HEK293 (cell line): ENCODE measurements at regions of chr6 and their contacts with region 1.

Region 1: DNA sequence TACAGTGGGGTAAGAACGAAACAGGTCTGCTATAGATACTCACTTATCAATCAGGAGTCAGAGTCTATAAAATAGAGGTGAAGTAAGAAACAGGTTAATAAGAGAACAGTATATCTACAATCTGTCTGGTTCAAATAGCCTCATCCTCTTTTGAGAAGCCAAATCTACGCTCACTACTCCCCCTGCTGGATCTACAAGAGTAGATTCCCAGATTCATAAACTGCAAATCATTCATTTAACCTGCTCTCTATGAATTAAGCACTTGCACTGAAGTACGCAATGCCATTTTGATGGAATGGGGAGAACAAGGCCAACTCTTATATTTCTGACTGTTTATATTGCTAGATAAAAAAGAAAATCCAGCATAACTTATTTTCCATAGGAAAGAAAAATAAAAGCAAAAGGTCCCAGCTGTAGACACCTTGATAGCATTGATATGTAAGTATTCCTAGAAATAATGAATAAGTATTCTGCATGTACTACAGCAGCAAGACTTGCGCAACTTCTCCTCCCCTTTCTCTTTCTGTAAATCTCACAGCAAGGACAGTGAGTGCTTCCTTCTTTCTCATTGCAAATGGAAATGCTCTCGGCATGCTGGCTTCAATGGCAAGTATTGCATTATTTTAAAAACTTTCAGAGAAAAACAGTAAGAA is 92.3 kb downstream of the RFX6 start:
- H3K4me3 ChIP-seq: no peak overlapping the region
- H3K27ac ChIP-seq: no peak overlapping the region
- H3K4me1 ChIP-seq: no peaks in the 10 kb centered on the region
- CTCF ChIP-seq: peak; percentile 54; the same call in 1 of the 2 replicates

Region 2: DNA sequence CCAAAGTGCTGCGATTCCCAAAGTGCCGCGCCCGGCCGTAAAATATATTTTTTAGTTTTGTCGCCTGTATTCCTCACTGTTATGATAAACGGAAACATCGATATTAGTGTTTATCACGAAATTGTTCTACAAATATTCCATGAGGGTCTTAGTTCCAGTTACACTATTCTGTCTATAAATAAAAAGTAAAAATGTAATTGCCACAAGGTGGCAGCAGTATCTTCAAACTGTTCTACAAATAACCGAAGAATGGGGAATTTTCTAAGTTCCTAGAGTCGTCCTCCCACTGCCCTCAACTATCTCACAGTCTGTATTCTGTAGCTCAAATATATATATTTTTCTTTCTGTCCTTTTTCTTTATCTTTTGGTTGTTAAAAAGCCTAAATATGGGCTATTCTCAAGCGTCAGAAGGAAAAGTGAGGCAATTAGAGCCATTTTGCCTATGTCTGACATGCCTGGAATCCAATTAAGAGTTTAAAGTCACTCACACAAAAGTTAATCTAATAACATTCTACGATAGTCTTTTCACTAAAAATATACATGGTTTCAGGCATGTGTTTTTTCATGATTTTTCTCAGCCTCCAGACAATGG is 189.7 kb before region 1 on chr6:
- CTCF ChIA-PET with region 1: interaction called, 27 read pairs
- POLR2A ChIA-PET with region 1: no interaction called
- H3K4me3 ChIP-seq: no peak overlapping the region
- H3K27ac ChIP-seq: no peak overlapping the region
- H3K4me1 ChIP-seq: no peaks in the 10 kb centered on the region
- CTCF ChIP-seq: no peak

Region 3: GRCh38 chr6:116887168-116887567 is 82.2 kb before region 1 on chr6:
- CTCF ChIA-PET with region 1: interaction called, 106 read pairs
- POLR2A ChIA-PET with region 1: no interaction called
- H3K4me3 ChIP-seq: no peak overlapping the region
- H3K27ac ChIP-seq: no peak overlapping the region
- H3K4me1 ChIP-seq: peaks cover 16% of the 10 kb centered on the region
- CTCF ChIP-seq: no peak

Region 4: GRCh38 chr6:116948533-116949304 is 20.6 kb before region 1 on chr6:
- CTCF ChIA-PET with region 1: interaction called, 17 read pairs
- POLR2A ChIA-PET with region 1: no interaction called
- H3K4me3 ChIP-seq: no peak overlapping the region
- H3K27ac ChIP-seq: no peak overlapping the region
- H3K4me1 ChIP-seq: peaks cover 24% of the 10 kb centered on the region
- CTCF ChIP-seq: no peak

Region 5: DNA sequence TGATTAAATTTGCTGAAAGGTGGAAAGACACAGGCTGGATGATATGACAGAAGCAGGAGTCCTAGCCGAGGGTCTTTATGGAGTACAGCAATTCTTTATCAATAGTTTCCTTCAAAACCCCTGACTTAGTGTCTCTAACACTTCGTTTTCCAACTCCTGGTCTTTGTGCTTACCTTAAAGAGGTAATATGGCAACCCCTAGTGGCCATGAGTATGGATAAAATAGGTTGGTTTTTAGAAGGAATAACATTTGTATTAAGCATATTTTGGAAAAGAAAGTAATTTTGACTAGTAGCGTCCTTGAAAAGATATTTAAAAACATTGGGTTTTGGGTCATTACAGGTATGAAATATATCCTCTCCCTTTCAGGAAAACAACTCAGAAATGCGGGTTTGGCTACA is 347.9 kb after region 1 on chr6:
- CTCF ChIA-PET with region 1: interaction called, 93 read pairs
- POLR2A ChIA-PET with region 1: no interaction called
- H3K4me3 ChIP-seq: no peak overlapping the region
- H3K27ac ChIP-seq: no peak overlapping the region
- H3K4me1 ChIP-seq: no peaks in the 10 kb centered on the region
- CTCF ChIP-seq: 0 out of 2 replicates have a peak, but pooled peaks have one; percentile 41